ENCODE measurements at regions of chr19 and their contacts with region 1.

Region 1: DNA sequence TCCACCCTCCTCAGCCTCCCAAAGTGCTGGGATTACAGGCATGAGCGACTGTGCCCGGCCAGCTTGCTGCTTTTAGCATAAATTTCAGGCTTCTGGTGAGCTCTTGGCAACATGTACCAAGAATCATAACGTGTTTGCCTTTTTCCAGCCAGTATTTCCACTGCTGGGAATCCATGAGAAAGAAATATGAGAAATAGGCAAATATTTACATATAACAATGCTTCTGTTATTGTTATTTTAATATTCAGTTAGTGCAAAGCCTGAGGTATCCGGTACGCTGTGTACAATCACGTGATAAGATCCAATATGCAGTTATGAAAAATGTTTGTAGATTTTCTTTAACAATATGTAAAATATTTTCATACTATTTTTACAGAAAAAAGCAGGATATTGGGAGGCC is 29.1 kb upstream of the CERS4 start:
- DNase-seq: no peak
- ATAC-seq: no peak
- H3K4me3 ChIP-seq: no peak overlapping the region
- H3K4me3 Mint-ChIP-seq: no peak overlapping the region
- H3K27ac ChIP-seq: no peak overlapping the region
- H3K27ac Mint-ChIP-seq: peak overlapping the region in 1 of 2 donors; percentile 94
- H3K4me1 ChIP-seq: peaks cover 22% of the 10 kb centered on the region
- H3K4me1 Mint-ChIP-seq: peaks cover 6 to 9% of the 10 kb centered on the region in 2 donors
- H3K27me3 ChIP-seq: no peaks in the 10 kb centered on the region
- H3K27me3 Mint-ChIP-seq: no peaks in the 10 kb centered on the region
- CTCF ChIP-seq: no peak

Region 2: GRCh38 chr19:8113016-8113416 is 67.0 kb before region 1 on chr19:
- intact Hi-C with region 1: no loop called
- DNase-seq: no peak
- ATAC-seq: no peak
- H3K4me3 ChIP-seq: no peak overlapping the region
- H3K4me3 Mint-ChIP-seq: no peak overlapping the region
- H3K27ac ChIP-seq: no peak overlapping the region
- H3K27ac Mint-ChIP-seq: no peak overlapping the region
- H3K4me1 ChIP-seq: no peaks in the 10 kb centered on the region
- H3K4me1 Mint-ChIP-seq: no peaks in the 10 kb centered on the region
- H3K27me3 ChIP-seq: no peaks in the 10 kb centered on the region
- H3K27me3 Mint-ChIP-seq: no peaks in the 10 kb centered on the region
- CTCF ChIP-seq: no peak

Region 3: DNA sequence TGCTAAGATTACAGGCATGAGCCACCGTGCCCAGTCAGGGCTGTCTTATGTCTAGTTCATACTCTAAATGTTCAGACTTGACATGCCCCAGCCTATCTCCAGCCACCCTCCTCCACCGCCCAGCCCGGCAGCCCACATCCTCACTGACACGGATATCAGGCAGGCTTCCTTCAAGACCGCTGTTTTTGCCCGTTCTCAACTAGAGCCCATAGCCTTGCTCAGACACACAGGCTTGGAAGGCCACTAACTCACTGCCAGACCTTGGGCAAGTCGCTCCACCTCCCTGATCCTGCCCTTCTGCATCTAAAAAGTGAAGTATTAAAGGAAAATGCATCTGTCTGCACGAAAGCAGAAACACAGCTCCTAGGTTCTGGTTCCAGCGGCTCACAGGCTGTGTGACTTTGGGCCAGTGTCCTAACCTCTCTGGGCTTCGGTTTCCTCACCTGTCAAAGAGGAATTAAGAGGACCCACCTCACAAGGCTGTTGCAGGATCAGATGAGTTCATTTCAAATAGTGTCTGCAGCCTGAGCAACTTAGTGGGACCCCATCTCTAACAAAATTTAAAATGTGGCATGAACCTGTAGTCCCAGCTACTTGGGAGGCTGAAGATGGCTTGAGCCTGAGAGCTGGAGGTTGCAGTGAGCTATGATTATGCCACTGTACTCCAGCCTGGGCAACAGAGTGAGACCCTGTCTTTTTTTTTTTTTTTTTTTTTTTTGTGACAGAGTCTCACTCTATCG is 14.6 kb after region 1 on chr19:
- intact Hi-C with region 1: loop called (anchors 1 kb)
- DNase-seq: peak; percentile 70 to 75
- ATAC-seq: peak; percentile 58 to 83 (median 63)
- H3K4me3 ChIP-seq: peak overlapping the region; percentile 22
- H3K4me3 Mint-ChIP-seq: peak overlapping the region; percentile 85
- H3K27ac ChIP-seq: peak overlapping the region; percentile 86
- H3K27ac Mint-ChIP-seq: peak overlapping the region; percentile 98
- H3K4me1 ChIP-seq: peaks cover 52% of the 10 kb centered on the region
- H3K4me1 Mint-ChIP-seq: peaks cover 53 to 59% of the 10 kb centered on the region in 2 donors
- H3K27me3 ChIP-seq: no peaks in the 10 kb centered on the region
- H3K27me3 Mint-ChIP-seq: no peaks in the 10 kb centered on the region
- CTCF ChIP-seq: no peak